Right cardiac atrium (tissue), 5 donors: ENCODE measurements at regions of chr10 and their contacts with region 1.

Region 1: DNA sequence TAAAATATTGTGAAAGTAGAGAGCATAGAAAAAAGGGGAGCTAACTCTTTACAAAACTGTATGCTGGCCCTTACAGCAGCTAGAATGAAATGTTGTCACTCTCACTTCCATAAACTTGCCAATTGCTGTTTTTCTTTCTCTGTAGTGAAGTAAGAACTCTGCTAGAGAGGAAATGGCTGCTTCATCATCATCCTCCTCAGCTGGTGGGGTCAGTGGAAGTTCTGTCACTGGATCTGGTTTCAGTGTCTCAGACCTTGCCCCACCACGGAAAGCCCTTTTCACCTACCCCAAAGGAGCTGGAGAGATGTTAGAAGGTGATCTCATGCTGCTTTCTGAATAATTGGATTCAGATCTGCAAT is 7.6 kb upstream of the ASCC1 start:
- DNase-seq: no peak
- ATAC-seq: peak; percentile 41 to 53
- H3K4me3 ChIP-seq: no peak overlapping the region
- H3K27ac ChIP-seq: peak overlapping the region; percentile 97
- H3K4me1 ChIP-seq: no peaks in the 10 kb centered on the region
- H3K27me3 ChIP-seq: no peaks in the 10 kb centered on the region

Region 2: GRCh38 chr10:72126184-72126871 is 97.4 kb before region 1 on chr10:
- intact Hi-C with region 1: loop called in 3 of 4 experiments (anchors 10 kb)
- DNase-seq: no peak
- ATAC-seq: peak; percentile 28 to 37
- H3K4me3 ChIP-seq: no peak overlapping the region
- H3K27ac ChIP-seq: no peak overlapping the region
- H3K4me1 ChIP-seq: no peaks in the 10 kb centered on the region
- H3K27me3 ChIP-seq: no peaks in the 10 kb centered on the region

Region 3: DNA sequence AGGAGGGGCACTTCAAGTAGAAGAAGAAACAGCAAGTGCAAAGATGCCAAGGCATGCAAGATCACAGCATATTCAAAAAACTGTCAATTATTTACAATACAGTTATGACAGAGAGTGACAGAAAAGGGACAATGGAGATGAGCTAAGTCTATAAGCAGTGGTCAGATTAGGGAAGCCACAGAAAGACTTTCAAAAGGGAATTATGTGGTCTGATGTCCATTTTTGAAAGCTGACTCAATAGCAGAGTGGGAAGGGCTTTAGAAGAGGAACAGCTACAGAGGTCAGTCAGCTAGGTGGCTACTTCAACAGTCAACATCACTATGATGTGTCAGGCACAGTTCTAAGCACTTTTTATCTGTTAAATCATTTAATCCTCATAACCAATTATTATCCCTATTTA is 90.2 kb before region 1 on chr10:
- intact Hi-C with region 1: loop called in 3 of 4 experiments (anchors 10 kb)
- DNase-seq: no peak
- ATAC-seq: peak in 1 of 2 donors; percentile 59
- H3K4me3 ChIP-seq: no peak overlapping the region
- H3K27ac ChIP-seq: no peak overlapping the region
- H3K4me1 ChIP-seq: no peaks in the 10 kb centered on the region
- H3K27me3 ChIP-seq: no peaks in the 10 kb centered on the region

Region 4: DNA sequence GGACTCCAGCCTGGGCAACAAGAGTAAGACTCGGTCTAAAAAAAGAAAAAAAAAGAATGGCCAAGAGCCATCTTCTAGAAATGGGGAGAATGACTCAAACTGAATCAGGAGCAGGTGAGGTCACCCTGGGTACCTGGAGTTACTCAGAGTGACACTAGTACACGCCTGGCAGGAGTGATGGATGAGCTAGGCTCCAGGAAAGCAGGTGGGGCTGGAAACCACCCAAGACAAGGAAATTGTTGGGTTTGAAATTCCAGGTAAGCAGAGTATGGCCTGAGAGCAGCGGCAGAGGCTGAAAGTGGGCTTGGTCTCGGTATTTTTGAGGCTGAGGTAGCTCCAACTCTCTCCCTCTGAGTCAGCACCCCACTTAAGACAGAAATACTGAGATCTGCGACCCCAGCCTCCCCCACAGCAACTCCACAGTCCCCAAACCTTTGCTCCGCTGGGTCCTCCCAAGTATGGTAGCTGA is 68.5 kb after region 1 on chr10:
- intact Hi-C with region 1: no loop called
- DNase-seq: peak in 2 of 3 donors; percentile 9 to 16
- ATAC-seq: no peak
- H3K4me3 ChIP-seq: no peak overlapping the region
- H3K27ac ChIP-seq: no peak overlapping the region
- H3K4me1 ChIP-seq: no peaks in the 10 kb centered on the region
- H3K27me3 ChIP-seq: no peaks in the 10 kb centered on the region

Region 5: DNA sequence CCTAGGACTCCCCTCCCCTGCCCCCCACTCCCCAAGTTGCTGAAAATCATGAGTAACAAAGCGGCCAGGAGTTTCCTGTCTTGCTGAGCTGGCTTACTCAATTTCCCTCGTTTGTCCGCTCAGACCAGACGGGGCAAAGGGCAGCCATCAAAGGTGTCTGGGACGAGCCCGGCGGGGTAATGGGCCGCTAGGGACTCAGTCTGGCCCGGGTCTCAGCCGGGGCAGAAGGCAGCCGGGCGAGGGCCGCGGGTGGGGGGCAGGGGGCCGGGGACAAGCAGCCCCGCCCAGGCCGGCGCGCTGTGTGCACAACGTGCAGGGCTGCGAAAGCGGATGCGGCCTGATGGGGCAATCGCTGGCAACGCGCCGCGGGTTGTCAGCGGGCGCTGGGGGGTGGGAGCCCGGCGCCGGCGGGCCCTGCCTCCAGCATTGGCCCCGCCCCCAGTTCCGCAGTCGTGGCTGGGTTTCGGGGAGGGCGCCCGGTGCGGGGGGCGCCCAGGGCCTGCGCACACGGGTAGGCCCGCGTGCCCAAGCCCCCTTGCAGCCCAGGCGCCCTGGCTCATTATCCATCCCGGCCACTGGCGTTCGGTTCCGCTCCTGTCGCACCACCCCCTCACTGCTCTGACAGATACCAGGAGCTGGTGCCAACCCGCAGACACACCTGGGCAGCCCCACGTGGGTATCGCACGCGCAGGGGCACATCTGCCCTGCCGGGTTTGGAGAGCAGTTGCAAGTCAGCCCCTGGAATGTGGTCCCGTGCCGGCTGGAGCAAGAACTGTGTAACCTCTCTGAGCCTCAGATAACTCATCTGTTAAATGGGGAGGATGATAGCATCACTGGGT is 95.9 kb after region 1 on chr10:
- intact Hi-C with region 1: loop called in 1 of 4 experiments (anchors 10 kb)
- DNase-seq: peak; percentile 96 to 99 (median 99)
- ATAC-seq: peak; percentile 87 to 90
- H3K4me3 ChIP-seq: peak overlapping the region; percentile 27
- H3K27ac ChIP-seq: peak overlapping the region; percentile 93
- H3K4me1 ChIP-seq: peaks cover 18% of the 10 kb centered on the region
- H3K27me3 ChIP-seq: no peaks in the 10 kb centered on the region

Region 6: GRCh38 chr10:72449915-72450441 is 226.3 kb after region 1 on chr10:
- intact Hi-C with region 1: no loop called
- DNase-seq: no peak
- ATAC-seq: no peak
- H3K4me3 ChIP-seq: no peak overlapping the region
- H3K27ac ChIP-seq: no peak overlapping the region
- H3K4me1 ChIP-seq: no peaks in the 10 kb centered on the region
- H3K27me3 ChIP-seq: no peaks in the 10 kb centered on the region